Psoas muscle (tissue), 8 donors: ENCODE measurements at regions of chr13 and their contacts with region 1.

Region 1: DNA sequence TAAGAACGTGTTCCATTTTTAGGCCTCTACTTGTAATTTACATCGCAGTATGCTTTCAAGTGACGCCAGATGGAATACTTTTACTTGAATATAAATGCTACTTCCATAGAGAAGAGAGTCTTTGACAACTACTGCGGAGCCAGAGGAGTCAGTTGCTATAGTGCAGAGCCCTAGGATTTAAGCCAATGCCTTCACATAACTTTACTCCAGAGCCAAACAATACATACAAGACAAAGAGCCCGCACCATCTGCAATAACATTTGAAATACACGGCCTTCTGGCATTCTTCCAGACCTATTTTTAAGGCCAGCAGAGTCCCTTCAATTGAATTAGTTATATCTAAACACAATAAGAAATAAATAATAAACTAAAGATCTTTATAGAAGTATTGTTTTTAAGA is 59.4 kb downstream of the XPO4 start:
- DNase-seq: no peak
- ATAC-seq: peak in 2 of 4 donors; percentile 60 to 63
- H3K4me3 ChIP-seq: no peak overlapping the region
- H3K27ac ChIP-seq: peak overlapping the region; percentile 7
- H3K4me1 ChIP-seq: peaks cover 24% of the 10 kb centered on the region
- H3K27me3 ChIP-seq: no peaks in the 10 kb centered on the region
- CTCF ChIP-seq: no peak

Region 2: GRCh38 chr13:19766213-19766990 is 1076.8 kb before region 1 on chr13:
- intact Hi-C with region 1: no loop called
- DNase-seq: no peak
- ATAC-seq: no peak
- H3K4me3 ChIP-seq: no peak overlapping the region
- H3K27ac ChIP-seq: no peak overlapping the region
- H3K4me1 ChIP-seq: peaks cover 7% of the 10 kb centered on the region
- H3K27me3 ChIP-seq: no peaks in the 10 kb centered on the region
- CTCF ChIP-seq: no peak

Region 3: GRCh38 chr13:20351281-20352022 is 491.7 kb before region 1 on chr13:
- intact Hi-C with region 1: no loop called
- DNase-seq: no peak
- ATAC-seq: no peak
- H3K4me3 ChIP-seq: no peak overlapping the region
- H3K27ac ChIP-seq: no peak overlapping the region
- H3K4me1 ChIP-seq: no peaks in the 10 kb centered on the region
- H3K27me3 ChIP-seq: no peaks in the 10 kb centered on the region
- CTCF ChIP-seq: no peak

Region 4: GRCh38 chr13:20902438-20903163 is 59.4 kb after region 1 on chr13 and contains the start of gene XPO4:
- intact Hi-C with region 1: loop called in 1 of 2 experiments (anchors 10 kb)
- DNase-seq: peak; percentile 86 to 91
- ATAC-seq: peak; percentile 94 to 98 (median 96)
- H3K4me3 ChIP-seq: peak within 1 kb of the TSS; percentile 100
- H3K27ac ChIP-seq: peak within 1 kb of the TSS; percentile 97
- H3K4me1 ChIP-seq: peaks cover 16% of the 10 kb centered on the region
- H3K27me3 ChIP-seq: no peaks in the 10 kb centered on the region
- CTCF ChIP-seq: no peak
- total RNA-seq, gene XPO4: 12.2 to 67.2 (median 31.1) TPM

Region 5: GRCh38 chr13:20997430-20998161 is 154.4 kb after region 1 on chr13:
- intact Hi-C with region 1: no loop called
- DNase-seq: peak in 1 of 2 donors; percentile 74
- ATAC-seq: peak in 2 of 4 donors; percentile 41 to 53
- H3K4me3 ChIP-seq: no peak overlapping the region
- H3K27ac ChIP-seq: peak overlapping the region; percentile 25
- H3K4me1 ChIP-seq: peaks cover 42% of the 10 kb centered on the region
- H3K27me3 ChIP-seq: no peaks in the 10 kb centered on the region
- CTCF ChIP-seq: no peak

Region 6: GRCh38 chr13:21326155-21327031 is 483.2 kb after region 1 on chr13:
- intact Hi-C with region 1: no loop called
- DNase-seq: no peak
- ATAC-seq: peak in 1 of 4 donors; percentile 40
- H3K4me3 ChIP-seq: peak overlapping the region; percentile 53
- H3K27ac ChIP-seq: no peak overlapping the region
- H3K4me1 ChIP-seq: no peaks in the 10 kb centered on the region
- H3K27me3 ChIP-seq: peaks cover 0 to 10% (median 0%) of the 10 kb centered on the region in 3 donors
- CTCF ChIP-seq: no peak